ENCODE measurements at regions of chr2 and their contacts with region 1.

Region 1: DNA sequence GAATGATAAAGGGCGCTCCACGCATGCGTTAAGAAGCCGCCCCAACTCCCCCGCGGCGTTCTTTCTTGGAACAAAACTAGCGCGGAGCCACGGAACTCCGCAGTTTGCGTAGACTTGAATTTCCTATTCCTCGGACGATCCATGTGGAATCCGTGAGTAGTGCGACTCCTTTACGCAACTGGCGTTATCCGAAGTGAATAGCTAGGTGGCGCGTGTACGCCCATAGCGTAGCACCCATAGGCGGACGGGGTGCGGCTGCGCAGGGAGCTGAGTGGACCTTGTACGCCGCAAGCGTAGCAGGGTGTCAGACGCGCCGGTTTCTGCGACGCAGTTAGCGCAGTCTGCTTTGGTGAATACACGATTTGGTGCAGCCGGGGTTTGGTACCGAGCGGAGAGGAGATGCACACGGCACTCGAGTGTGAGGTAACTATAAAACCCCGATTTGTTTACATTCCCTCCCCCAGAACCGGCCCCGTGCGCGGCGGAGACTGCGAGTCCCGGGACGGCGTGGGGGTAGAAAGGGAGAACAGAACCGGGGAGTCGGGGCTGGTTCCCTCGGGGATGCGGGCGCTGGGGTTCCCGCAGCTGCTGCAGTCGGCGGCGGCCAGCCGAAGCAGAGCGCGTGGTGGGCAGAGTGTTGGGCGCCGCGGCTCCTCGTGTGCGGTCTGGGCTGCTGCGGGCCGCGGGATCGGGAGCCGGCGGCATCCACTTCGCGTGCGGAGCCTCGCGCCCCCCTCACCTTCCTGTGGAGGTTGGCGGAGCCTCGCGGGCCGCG is at the start of gene SLC39A10:
- DNase-seq: peak; percentile 96
- H3K4me3 ChIP-seq: peak within 1 kb of the TSS; percentile 83
- H3K27ac ChIP-seq: peak within 1 kb of the TSS; percentile 93
- H3K27me3 ChIP-seq: no peaks in the 10 kb centered on the region
- CTCF ChIP-seq: peak; percentile 11

Region 2: GRCh38 chr2:195498176-195498575 is 158.9 kb before region 1 on chr2:
- in situ Hi-C with region 1: loop called (anchors 25 kb)
- DNase-seq: no peak
- H3K4me3 ChIP-seq: no peak overlapping the region
- H3K27ac ChIP-seq: no peak overlapping the region
- H3K27me3 ChIP-seq: no peaks in the 10 kb centered on the region
- CTCF ChIP-seq: peak; percentile 52

Region 3: GRCh38 chr2:196468394-196468793 is 811.3 kb after region 1 on chr2:
- in situ Hi-C with region 1: no loop called
- DNase-seq: no peak
- H3K4me3 ChIP-seq: no peak overlapping the region
- H3K27ac ChIP-seq: no peak overlapping the region
- H3K27me3 ChIP-seq: no peaks in the 10 kb centered on the region
- CTCF ChIP-seq: peak; percentile 24